ENCODE measurements at regions of chr11 and their contacts with region 1.

Region 1: GRCh38 chr11:568306-569157 is 7.7 kb upstream of the PHRF1 start:
- DNase-seq: peak; percentile 84 to 95
- ATAC-seq: peak; percentile 84 to 89
- H3K4me3 ChIP-seq: peak overlapping the region; percentile 62 to 83 (median 74)
- H3K27ac ChIP-seq: peak overlapping the region; percentile 85 to 97 (median 91)
- H3K4me1 ChIP-seq: peaks cover 8 to 24% of the 10 kb centered on the region in 2 donors
- H3K27me3 ChIP-seq: no peaks in the 10 kb centered on the region
- CTCF ChIP-seq: peak in 1 of 5 experiments; percentile 24
- POLR2A ChIP-seq: peak; percentile 79 to 83

Region 2: GRCh38 chr11:535519-536454 is 32.7 kb before region 1 on chr11 and contains the start of gene HRAS:
- in situ Hi-C with region 1: no loop called
- intact Hi-C with region 1: loop called (anchors 2 kb)
- DNase-seq: peak; percentile 91 to 92
- ATAC-seq: peak; percentile 84 to 88
- H3K4me3 ChIP-seq: peak within 1 kb of the TSS; percentile 75 to 82 (median 78)
- H3K27ac ChIP-seq: peak within 1 kb of the TSS; percentile 80 to 92 (median 90)
- H3K4me1 ChIP-seq: peaks cover 18 to 29% of the 10 kb centered on the region in 2 donors
- H3K27me3 ChIP-seq: peaks cover 21 to 25% (median 25%) of the 10 kb centered on the region in 3 donors
- CTCF ChIP-seq: no peak
- POLR2A ChIP-seq: peak; percentile 63 to 73
- total RNA-seq, gene HRAS: 17.1 to 50.0 (median 37.6) TPM

Region 3: DNA sequence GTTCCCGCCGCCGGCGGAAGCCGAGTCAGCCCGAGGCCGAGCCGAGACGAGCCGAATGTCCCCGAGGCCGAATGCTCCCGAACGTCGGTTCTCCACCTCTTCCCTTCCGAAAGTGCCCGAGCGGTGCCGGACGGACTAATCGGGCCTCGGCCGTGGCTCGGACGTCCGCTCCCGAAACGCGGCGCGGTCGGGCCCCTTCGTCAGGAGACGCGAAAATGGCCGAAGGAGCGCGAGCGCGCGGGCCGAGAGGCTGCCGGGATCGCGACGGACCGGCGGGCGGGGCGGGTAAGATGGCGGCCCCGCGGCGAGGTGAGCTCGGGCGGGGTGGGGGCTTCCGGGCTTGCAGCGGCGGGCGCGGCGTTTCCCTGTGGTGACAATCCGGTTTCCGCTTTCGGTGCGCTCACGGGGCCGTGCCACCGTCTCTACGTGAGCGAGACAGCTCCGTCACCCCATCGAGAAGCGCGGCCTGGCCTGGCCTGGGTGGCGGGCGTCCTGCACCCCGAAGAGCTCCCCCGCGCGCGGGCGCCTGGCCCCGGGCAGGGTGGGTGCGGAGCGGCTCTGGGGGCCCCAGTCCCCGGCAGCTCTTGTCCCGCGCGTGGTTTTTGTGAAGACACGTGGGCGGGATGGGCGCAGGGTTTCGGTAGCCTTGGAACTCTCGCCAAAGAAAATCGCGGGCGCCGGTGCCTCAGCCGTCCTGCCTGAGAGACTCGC is 127.2 kb after region 1 on chr11 and contains the start of gene TMEM80:
- in situ Hi-C with region 1: loop called in 3 of 4 experiments (anchors 25 kb)
- intact Hi-C with region 1: loop called (anchors 5 kb)
- DNase-seq: peak; percentile 99
- ATAC-seq: peak; percentile 72 to 74
- H3K4me3 ChIP-seq: peak within 1 kb of the TSS; percentile 77 to 92 (median 89)
- H3K27ac ChIP-seq: peak within 1 kb of the TSS; percentile 92 to 100 (median 98)
- H3K4me1 ChIP-seq: peaks cover 33 to 35% of the 10 kb centered on the region in 2 donors
- H3K27me3 ChIP-seq: no peaks in the 10 kb centered on the region
- CTCF ChIP-seq: no peak
- POLR2A ChIP-seq: peak; percentile 69 to 72
- total RNA-seq, gene TMEM80: 3.2 to 22.3 (median 14.3) TPM

Region 4: GRCh38 chr11:747158-748006 is 178.8 kb after region 1 on chr11 and contains the start of gene TALDO1:
- in situ Hi-C with region 1: loop called in 1 of 4 experiments (anchors 25 kb)
- intact Hi-C with region 1: no loop called
- DNase-seq: peak; percentile 83 to 88
- ATAC-seq: peak; percentile 91 to 92
- H3K4me3 ChIP-seq: peak within 1 kb of the TSS; percentile 67 to 99 (median 85)
- H3K27ac ChIP-seq: peak within 1 kb of the TSS; percentile 78 to 98 (median 93)
- H3K4me1 ChIP-seq: peaks cover 13 to 16% of the 10 kb centered on the region in 2 donors
- H3K27me3 ChIP-seq: no peaks in the 10 kb centered on the region
- CTCF ChIP-seq: peak in 4 of 5 experiments; percentile 9 to 46 (median 27)
- POLR2A ChIP-seq: peak; percentile 77 to 92
- total RNA-seq, gene TALDO1: 98.6 to 167 (median 153) TPM